ENCODE measurements at regions of chr2 and their contacts with region 1.

Region 1: GRCh38 chr2:150653351-150653750 is 165.9 kb upstream of the RND3 start:
- DNase-seq: no peak

Region 2: DNA sequence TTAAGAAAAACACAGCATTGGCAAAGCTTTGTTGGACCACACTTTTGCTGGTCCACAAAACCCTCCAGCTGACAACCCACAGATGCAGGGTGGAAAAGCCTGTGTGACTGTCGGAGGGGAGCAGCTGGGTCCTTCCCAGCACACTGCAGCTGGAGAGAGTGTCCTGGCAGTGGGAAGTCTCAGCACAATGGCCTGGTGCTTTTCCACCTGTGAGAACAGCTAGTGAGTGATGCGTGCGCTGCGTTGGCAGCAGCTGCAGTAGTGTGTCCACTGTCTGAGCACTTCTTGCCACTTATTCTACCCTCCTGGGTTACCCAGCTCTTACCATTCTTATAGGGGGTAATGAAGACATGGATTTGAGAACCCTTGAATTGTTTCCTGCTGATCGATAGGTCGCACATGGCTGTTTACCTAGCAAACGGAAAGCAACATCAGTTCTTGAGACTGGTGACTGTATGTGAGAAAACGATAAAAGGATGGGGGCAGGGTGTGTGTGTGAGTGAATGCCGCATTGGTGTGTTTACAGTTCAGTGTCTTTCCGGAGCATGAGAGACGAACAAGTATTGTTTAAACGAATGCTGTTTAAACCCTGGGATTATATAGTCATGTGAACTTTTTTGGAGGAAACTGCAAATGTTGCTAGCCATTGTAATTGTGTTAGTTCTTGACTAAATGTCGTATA is 1253.3 kb before region 1 on chr2:
- intact Hi-C with region 1: loop called in 1 of 2 experiments (anchors 10 kb)
- DNase-seq: no peak

Region 3: GRCh38 chr2:150911766-150912280 is 258.5 kb after region 1 on chr2:
- intact Hi-C with region 1: no loop called
- DNase-seq: peak; percentile 90

Measured in posterior vena cava (tissue), 2 donors.